ENCODE measurements at regions of chr2 and their contacts with region 1.

Region 1: GRCh38 chr2:73112913-73113633 is at the start of gene RAB11FIP5:
- DNase-seq: peak in 1 of 2 donors; percentile 90
- H3K4me3 ChIP-seq: peak within 1 kb of the TSS; percentile 78 to 84
- H3K27ac ChIP-seq: peak within 1 kb of the TSS; percentile 92 to 98
- H3K4me1 ChIP-seq: peaks cover 0 to 18% of the 10 kb centered on the region in 2 donors
- H3K27me3 ChIP-seq: no peaks in the 10 kb centered on the region
- CTCF ChIP-seq: peak in 1 of 3 experiments; percentile 12
- total RNA-seq, gene RAB11FIP5: 95.3 TPM

Region 2: GRCh38 chr2:71331581-71332434 is 1781.3 kb before region 1 on chr2 and contains the start of gene ZNF638:
- intact Hi-C with region 1: loop called (anchors 5 kb)
- DNase-seq: peak; percentile 66 to 94
- H3K4me3 ChIP-seq: peak within 1 kb of the TSS; percentile 67 to 93
- H3K27ac ChIP-seq: peak within 1 kb of the TSS; percentile 79 to 93
- H3K4me1 ChIP-seq: peaks cover 4 to 20% of the 10 kb centered on the region in 2 donors
- H3K27me3 ChIP-seq: no peaks in the 10 kb centered on the region
- CTCF ChIP-seq: peak; percentile 63 to 81 (median 81)
- total RNA-seq, gene ZNF638: 56.0 TPM

Region 3: DNA sequence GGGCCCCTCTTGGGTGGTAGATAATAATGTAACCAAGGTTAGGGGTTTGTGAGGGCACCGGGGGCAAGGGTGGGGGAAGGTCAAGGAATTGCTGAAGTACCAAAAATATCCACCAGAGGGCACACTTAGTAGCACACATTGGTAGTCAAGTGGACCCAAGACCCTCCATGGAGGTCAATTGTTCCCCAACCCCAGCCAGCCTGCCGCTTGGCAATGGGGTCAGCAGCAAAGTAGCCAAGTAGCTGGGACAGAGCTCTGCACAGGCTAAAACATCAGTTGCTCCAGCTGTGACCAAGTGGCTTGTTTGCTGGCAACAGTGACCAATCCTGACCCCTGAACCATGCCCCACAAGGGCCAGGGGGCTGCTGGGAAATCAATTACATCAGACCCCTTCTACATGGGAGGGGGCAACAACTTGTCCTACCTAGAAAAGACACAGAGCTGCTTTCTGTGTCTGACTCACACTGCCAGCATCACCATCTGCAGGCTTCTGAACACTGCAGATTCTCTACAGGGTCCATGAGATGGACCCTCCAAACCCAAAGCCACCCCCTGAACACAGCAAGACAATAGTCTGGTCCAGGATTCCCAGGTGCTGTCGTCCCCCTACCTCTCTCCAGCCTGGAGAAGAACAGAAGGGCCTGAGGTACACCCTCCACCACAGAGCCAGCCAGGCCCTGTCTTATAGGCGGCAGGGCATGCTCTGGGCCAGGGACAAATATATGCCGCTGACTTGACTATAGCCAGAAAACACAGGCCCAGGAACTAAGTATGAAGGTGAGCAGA is 119.7 kb before region 1 on chr2:
- intact Hi-C with region 1: no loop called
- DNase-seq: peak in 1 of 2 donors; percentile 64
- H3K4me3 ChIP-seq: no peak overlapping the region
- H3K27ac ChIP-seq: no peak overlapping the region
- H3K4me1 ChIP-seq: no peaks in the 10 kb centered on the region
- H3K27me3 ChIP-seq: no peaks in the 10 kb centered on the region
- CTCF ChIP-seq: peak; percentile 80 to 85 (median 82)